Naive thymus-derived CD8-positive, alpha-beta T cell (primary cell): ENCODE measurements at regions of chr1 and their contacts with region 1.

Region 1: DNA sequence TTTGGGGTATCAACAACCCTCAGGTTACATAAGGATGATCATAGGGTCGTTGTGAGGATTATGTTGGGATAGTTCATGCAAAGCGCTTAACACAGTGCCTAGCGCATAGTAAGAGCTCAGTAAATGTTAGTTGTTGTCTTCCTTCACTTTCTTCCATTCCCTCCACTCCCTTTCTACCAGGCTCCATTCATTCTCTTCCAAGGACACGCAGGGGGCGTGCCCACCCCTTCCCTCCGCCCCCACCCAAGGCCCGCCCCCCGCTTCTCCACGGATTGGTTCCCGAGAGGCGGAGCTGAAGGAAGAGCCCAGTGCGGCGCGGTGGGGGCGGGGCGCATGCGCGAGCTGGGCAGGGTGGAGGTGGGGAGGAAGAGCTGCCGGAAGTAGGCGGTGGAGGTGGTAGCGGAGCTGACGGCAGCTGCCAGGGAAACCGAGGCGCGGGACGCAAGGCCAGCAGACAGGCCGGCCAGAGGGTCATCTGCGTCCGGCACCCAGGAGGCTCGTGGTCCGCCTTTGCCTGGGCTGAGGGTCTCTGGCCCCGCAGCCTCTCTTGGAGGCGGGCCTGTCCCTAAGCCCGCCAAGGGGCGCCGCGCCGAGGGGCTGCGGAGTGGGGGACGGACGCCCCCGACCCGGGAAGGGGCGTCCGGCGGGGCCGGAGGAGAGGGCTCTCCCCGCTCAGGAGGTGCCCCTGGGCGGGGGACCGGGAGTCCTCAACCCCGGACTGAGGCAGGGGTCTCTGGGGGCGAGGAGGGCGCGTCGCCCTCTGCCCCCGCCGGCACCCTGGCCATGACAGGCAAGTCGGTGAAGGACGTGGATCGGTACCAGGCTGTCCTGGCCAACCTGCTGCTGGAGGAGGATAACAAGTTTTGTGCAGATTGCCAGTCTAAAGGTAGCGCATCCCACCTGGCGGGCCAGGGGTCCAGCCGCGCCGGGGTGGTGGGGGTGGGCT is at the start of gene SMAP2:
- DNase-seq: peak; percentile 89 to 97 (median 95)
- ATAC-seq: peak; percentile 78 to 82
- H3K4me3 Mint-ChIP-seq: peak within 1 kb of the TSS; percentile 84 to 100 (median 98)
- H3K27ac Mint-ChIP-seq: peak within 1 kb of the TSS; percentile 96 to 100 (median 100)
- H3K4me1 Mint-ChIP-seq: peaks cover 23 to 59% (median 52%) of the 10 kb centered on the region in 4 donors
- H3K27me3 Mint-ChIP-seq: peaks cover 0 to 5% (median 0%) of the 10 kb centered on the region in 5 donors
- polyA plus RNA-seq, gene SMAP2: 297 to 506 (median 298) TPM

Region 2: GRCh38 chr1:40210514-40211204 is 163.0 kb before region 1 on chr1:
- POLR2A ChIA-PET with region 1: no interaction called
- DNase-seq: no peak
- ATAC-seq: no peak
- H3K4me3 Mint-ChIP-seq: peak overlapping the region in 1 of 10 donors; percentile 60
- H3K27ac Mint-ChIP-seq: peak overlapping the region in 2 of 10 donors; percentile 6 to 27
- H3K4me1 Mint-ChIP-seq: peaks cover 0 to 14% (median 8%) of the 10 kb centered on the region in 4 donors
- H3K27me3 Mint-ChIP-seq: no peaks in the 10 kb centered on the region

Region 3: GRCh38 chr1:40315239-40315794 is 58.3 kb before region 1 on chr1:
- POLR2A ChIA-PET with region 1: interaction called, 13 read pairs
- DNase-seq: peak; percentile 79 to 91 (median 85)
- ATAC-seq: peak; percentile 60 to 76
- H3K4me3 Mint-ChIP-seq: peak overlapping the region; percentile 82 to 94 (median 91)
- H3K27ac Mint-ChIP-seq: peak overlapping the region in 9 of 10 donors; percentile 32 to 93 (median 91)
- H3K4me1 Mint-ChIP-seq: peaks cover 19 to 50% (median 40%) of the 10 kb centered on the region in 4 donors
- H3K27me3 Mint-ChIP-seq: peaks cover 0 to 11% (median 6%) of the 10 kb centered on the region in 5 donors

Region 4: GRCh38 chr1:40338745-40339424 is 34.7 kb before region 1 on chr1:
- POLR2A ChIA-PET with region 1: interaction called, 14 read pairs
- DNase-seq: peak; percentile 78 to 94 (median 89)
- ATAC-seq: peak; percentile 93 to 96
- H3K4me3 Mint-ChIP-seq: peak overlapping the region; percentile 26 to 76 (median 52)
- H3K27ac Mint-ChIP-seq: peak overlapping the region; percentile 22 to 90 (median 70)
- H3K4me1 Mint-ChIP-seq: peaks cover 28 to 49% (median 44%) of the 10 kb centered on the region in 4 donors
- H3K27me3 Mint-ChIP-seq: no peaks in the 10 kb centered on the region

Region 5: DNA sequence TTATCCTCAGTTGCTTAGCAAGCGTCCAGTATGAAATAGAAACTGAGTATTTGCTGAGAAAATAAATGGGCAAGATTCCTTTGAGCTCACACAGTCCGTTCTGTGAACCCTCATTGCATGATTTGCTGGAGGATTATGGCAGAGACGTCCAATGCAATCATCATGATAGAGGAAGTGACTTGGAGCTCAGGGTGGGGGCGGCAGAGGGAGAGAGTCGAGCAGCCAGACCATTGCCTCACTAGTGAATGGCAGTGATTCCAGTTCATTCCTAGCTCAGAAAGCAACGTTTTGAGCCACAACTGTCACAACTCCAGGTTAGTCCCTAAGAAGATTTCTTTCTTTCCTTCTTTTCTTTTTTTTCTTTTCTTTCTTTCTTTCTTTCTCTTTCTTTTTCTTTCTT is 29.0 kb before region 1 on chr1:
- POLR2A ChIA-PET with region 1: interaction called, 14 read pairs
- DNase-seq: peak in 8 of 10 donors; percentile 13 to 68 (median 20)
- ATAC-seq: peak; percentile 82 to 88
- H3K4me3 Mint-ChIP-seq: peak overlapping the region; percentile 70 to 89 (median 76)
- H3K27ac Mint-ChIP-seq: peak overlapping the region; percentile 33 to 93 (median 76)
- H3K4me1 Mint-ChIP-seq: peaks cover 39 to 56% (median 54%) of the 10 kb centered on the region in 4 donors
- H3K27me3 Mint-ChIP-seq: no peaks in the 10 kb centered on the region

Region 6: DNA sequence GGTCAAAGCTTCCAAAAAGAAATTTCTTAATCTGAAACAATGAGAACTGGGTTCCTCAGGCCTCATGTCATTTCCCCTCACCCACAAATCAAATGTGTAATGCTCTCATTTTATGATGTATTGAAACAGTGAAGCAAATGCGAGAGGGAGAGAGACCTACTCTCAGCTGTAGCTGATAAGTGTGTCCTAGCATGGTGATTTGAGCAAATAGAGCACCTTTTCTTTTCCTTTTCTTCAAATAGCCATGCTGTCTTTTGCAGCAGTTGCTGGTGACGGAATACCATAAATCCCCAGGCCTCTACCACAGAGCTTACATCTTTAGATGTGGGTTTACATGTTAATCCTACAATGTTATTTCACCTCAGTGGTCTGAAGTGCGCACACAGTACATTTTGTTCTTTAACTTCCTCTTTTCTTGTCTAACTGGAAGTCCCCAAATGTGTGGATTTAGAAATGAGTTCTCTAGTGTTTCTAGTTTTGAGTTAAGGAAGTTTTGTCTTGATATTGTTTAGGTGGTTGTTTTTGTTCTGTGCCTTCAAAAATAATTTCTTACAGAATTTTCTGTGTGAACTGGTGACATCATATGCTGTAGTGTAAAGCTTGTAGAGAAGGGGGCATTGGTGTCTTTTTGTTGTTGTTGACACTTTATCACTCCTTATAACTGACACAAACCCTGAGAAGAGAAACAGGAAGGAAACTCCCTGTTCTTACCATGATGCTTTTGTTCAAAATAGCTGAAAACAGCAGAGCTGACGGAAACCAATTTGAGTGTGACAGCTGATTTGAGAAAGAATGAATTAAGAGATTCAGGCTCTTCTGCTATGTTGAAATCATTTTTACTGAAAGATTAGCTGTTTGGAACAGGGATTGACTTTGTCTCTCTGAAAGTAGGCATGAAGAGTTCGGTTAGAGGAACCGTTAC is 12.1 kb after region 1 on chr1:
- POLR2A ChIA-PET with region 1: interaction called, 384 read pairs
- DNase-seq: peak; percentile 26 to 95 (median 86)
- ATAC-seq: peak; percentile 75
- H3K4me3 Mint-ChIP-seq: peak overlapping the region; percentile 78 to 97 (median 86)
- H3K27ac Mint-ChIP-seq: peak overlapping the region; percentile 97 to 100 (median 99)
- H3K4me1 Mint-ChIP-seq: peaks cover 52 to 96% (median 86%) of the 10 kb centered on the region in 4 donors
- H3K27me3 Mint-ChIP-seq: no peaks in the 10 kb centered on the region

Region 7: GRCh38 chr1:40404670-40405462 is 31.3 kb after region 1 on chr1:
- POLR2A ChIA-PET with region 1: interaction called, 31 read pairs
- DNase-seq: peak in 8 of 10 donors; percentile 36 to 86 (median 54)
- ATAC-seq: peak; percentile 73 to 90
- H3K4me3 Mint-ChIP-seq: peak overlapping the region; percentile 12 to 83 (median 65)
- H3K27ac Mint-ChIP-seq: peak overlapping the region; percentile 87 to 99 (median 96)
- H3K4me1 Mint-ChIP-seq: peaks cover 28 to 81% (median 72%) of the 10 kb centered on the region in 4 donors
- H3K27me3 Mint-ChIP-seq: no peaks in the 10 kb centered on the region